Naive thymus-derived CD4-positive, alpha-beta T cell (primary cell): ENCODE measurements at regions of chr7 and their contacts with region 1.

Region 1: GRCh38 chr7:7761340-7761980 is 43.1 kb upstream of the RPA3 start:
- DNase-seq: peak in 7 of 9 donors; percentile 25 to 59 (median 51)
- ATAC-seq: peak; percentile 45
- H3K4me3 ChIP-seq: peak overlapping the region; percentile 48
- H3K4me3 Mint-ChIP-seq: peak overlapping the region; percentile 69 to 99 (median 90)
- H3K27ac ChIP-seq: peak overlapping the region; percentile 76
- H3K27ac Mint-ChIP-seq: peak overlapping the region; percentile 88 to 99 (median 94)
- H3K4me1 ChIP-seq: peaks cover 8 to 31% of the 10 kb centered on the region in 2 donors
- H3K4me1 Mint-ChIP-seq: peaks cover 30 to 54% (median 51%) of the 10 kb centered on the region in 7 donors
- H3K27me3 ChIP-seq: no peaks in the 10 kb centered on the region
- H3K27me3 Mint-ChIP-seq: no peaks in the 10 kb centered on the region

Region 2: DNA sequence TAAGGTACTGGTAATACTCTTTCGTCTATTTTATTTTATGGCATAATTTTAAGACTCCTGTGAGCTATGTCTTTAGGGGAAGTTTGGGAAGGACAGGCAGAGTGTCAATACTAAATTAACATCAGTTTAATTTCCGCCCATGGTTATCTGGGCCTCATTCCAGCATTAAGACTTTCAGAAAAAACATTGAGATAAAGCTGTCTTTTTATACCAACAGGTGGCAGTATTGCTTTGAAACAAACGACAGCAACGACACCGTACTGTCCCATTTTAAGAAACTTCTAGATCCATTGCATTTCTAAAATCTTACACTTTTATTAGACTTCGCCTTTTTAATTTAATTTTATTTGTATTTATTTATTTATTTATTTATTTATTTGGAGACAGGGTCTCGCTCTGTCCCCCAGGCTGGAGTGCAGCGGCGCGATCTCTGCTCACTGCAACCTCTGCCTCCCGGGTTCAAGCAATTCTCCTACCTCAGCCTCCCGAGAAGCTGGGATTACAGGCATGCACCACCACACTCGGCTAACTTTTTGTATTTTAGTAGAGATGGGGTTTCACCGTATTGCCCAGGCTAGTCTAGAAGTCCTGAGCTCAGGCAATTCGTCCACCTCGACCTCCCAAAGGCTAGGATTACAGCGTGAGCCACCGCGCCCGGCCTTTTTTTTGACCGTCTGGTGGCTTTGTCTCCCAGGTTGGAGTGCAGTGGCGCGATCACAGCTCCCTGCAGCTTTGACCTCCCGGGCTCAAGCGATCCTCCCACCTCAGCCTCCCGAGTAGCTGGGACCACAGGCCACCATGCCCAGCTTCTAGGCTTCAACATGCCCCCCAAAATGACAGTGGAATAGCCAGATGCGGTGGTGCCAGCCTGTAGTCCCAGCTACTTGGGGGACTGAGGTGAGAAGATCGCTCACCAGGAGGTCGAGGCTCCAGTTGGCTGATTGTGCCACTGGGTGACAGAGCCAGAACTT is 657.8 kb before region 1 on chr7:
- CTCF ChIA-PET with region 1: interaction called, 3 read pairs
- POLR2A ChIA-PET with region 1: no interaction called
- intact Hi-C with region 1: loop called (anchors 1 to 5 kb)
- DNase-seq: peak in 7 of 9 donors; percentile 41 to 71 (median 61)
- ATAC-seq: peak; percentile 85
- H3K4me3 ChIP-seq: no peak overlapping the region
- H3K4me3 Mint-ChIP-seq: peak overlapping the region in 1 of 10 donors; percentile 42
- H3K27ac ChIP-seq: no peak overlapping the region
- H3K27ac Mint-ChIP-seq: peak overlapping the region in 3 of 9 donors; percentile 5 to 72 (median 43)
- H3K4me1 ChIP-seq: peaks cover 0 to 17% of the 10 kb centered on the region in 2 donors
- H3K4me1 Mint-ChIP-seq: peaks cover 6 to 31% (median 29%) of the 10 kb centered on the region in 7 donors
- H3K27me3 ChIP-seq: no peaks in the 10 kb centered on the region
- H3K27me3 Mint-ChIP-seq: peaks cover 0 to 9% (median 0%) of the 10 kb centered on the region in 5 donors

Region 3: GRCh38 chr7:7640221-7641128 is 121.0 kb before region 1 on chr7 and contains the start of gene UMAD1:
- CTCF ChIA-PET with region 1: interaction called, 6 read pairs
- POLR2A ChIA-PET with region 1: interaction called, 8 read pairs
- intact Hi-C with region 1: loop called (anchors 1 kb)
- DNase-seq: peak; percentile 86 to 100 (median 99)
- ATAC-seq: peak; percentile 97
- H3K4me3 ChIP-seq: peak within 1 kb of the TSS; percentile 79
- H3K4me3 Mint-ChIP-seq: peak within 1 kb of the TSS; percentile 90 to 98 (median 96)
- H3K27ac ChIP-seq: peak within 1 kb of the TSS; percentile 98
- H3K27ac Mint-ChIP-seq: peak within 1 kb of the TSS; percentile 97 to 99 (median 98)
- H3K4me1 ChIP-seq: peaks cover 14 to 19% of the 10 kb centered on the region in 2 donors
- H3K4me1 Mint-ChIP-seq: peaks cover 31 to 67% (median 55%) of the 10 kb centered on the region in 7 donors
- H3K27me3 ChIP-seq: no peaks in the 10 kb centered on the region
- H3K27me3 Mint-ChIP-seq: no peaks in the 10 kb centered on the region
- total RNA-seq, gene UMAD1: 11.4 to 28.5 (median 14.5) TPM

Region 4: DNA sequence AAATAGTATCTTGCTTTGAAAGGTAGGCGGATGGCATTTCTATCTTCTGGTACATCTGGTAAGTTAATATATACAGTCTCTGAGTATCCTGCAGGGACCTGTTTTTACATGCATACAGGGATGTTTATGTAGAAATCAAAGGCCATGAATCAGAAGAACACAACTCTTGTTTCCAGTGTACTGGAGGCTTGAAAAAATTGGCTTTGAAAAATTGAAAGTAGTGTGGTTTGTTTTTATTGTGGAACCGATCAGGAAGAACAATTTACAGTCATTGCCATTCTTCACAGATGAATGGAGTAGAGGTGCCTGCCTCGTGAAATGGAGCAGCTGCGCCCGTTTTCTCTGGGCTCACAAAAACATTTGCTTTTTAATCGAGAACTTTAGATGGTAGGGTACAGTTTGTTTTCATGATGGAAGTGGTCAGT is 10.9 kb after region 1 on chr7:
- CTCF ChIA-PET with region 1: interaction called, 6 read pairs
- POLR2A ChIA-PET with region 1: no interaction called
- intact Hi-C with region 1: loop called in 1 of 2 experiments (anchors 2 kb)
- DNase-seq: peak in 4 of 9 donors; percentile 18 to 41 (median 31)
- ATAC-seq: peak; percentile 40
- H3K4me3 ChIP-seq: peak overlapping the region; percentile 15
- H3K4me3 Mint-ChIP-seq: peak overlapping the region; percentile 64 to 95 (median 82)
- H3K27ac ChIP-seq: no peak overlapping the region
- H3K27ac Mint-ChIP-seq: peak overlapping the region; percentile 27 to 93 (median 79)
- H3K4me1 ChIP-seq: peaks cover 0 to 3% of the 10 kb centered on the region in 2 donors
- H3K4me1 Mint-ChIP-seq: peaks cover 10 to 46% (median 36%) of the 10 kb centered on the region in 7 donors
- H3K27me3 ChIP-seq: no peaks in the 10 kb centered on the region
- H3K27me3 Mint-ChIP-seq: no peaks in the 10 kb centered on the region

Region 5: DNA sequence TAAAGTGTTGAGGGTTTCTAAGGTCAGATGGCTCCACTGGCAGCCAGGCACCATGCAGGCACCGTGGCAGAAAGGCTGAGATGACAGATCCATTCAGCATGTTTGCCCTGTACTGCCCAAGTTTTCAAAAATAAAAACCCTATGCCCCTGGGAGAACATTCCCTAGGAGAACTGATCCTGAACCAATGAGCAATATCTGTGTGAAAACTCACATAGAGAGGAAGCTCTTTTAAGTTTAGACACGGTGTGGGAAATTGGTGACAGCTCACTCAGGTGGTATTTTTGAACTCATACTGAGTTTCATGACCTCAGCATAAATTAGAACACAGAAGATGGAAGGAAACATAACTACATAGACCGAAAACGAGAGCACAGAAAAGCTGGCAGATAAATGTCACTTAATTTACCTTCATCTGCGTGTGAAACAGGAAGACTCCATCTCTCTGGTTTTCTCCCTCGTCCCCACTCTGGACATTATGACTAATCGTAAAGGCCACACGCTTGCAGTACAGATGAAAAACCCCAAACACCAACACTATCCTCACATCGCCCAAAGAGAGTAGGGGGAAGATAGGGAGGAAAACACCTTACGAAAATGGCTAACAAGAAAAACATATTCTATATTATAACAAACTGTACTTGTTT is 372.8 kb after region 1 on chr7:
- CTCF ChIA-PET with region 1: interaction called, 5 read pairs
- POLR2A ChIA-PET with region 1: no interaction called
- intact Hi-C with region 1: loop called in 1 of 2 experiments (anchors 2 kb)
- DNase-seq: peak in 8 of 9 donors; percentile 25 to 51 (median 44)
- ATAC-seq: peak; percentile 32
- H3K4me3 ChIP-seq: peak overlapping the region; percentile 7
- H3K4me3 Mint-ChIP-seq: peak overlapping the region; percentile 25 to 82 (median 61)
- H3K27ac ChIP-seq: peak overlapping the region; percentile 47
- H3K27ac Mint-ChIP-seq: peak overlapping the region; percentile 78 to 98 (median 94)
- H3K4me1 ChIP-seq: peaks cover 45 to 50% of the 10 kb centered on the region in 2 donors
- H3K4me1 Mint-ChIP-seq: peaks cover 38 to 65% (median 56%) of the 10 kb centered on the region in 7 donors
- H3K27me3 ChIP-seq: no peaks in the 10 kb centered on the region
- H3K27me3 Mint-ChIP-seq: no peaks in the 10 kb centered on the region

Region 6: DNA sequence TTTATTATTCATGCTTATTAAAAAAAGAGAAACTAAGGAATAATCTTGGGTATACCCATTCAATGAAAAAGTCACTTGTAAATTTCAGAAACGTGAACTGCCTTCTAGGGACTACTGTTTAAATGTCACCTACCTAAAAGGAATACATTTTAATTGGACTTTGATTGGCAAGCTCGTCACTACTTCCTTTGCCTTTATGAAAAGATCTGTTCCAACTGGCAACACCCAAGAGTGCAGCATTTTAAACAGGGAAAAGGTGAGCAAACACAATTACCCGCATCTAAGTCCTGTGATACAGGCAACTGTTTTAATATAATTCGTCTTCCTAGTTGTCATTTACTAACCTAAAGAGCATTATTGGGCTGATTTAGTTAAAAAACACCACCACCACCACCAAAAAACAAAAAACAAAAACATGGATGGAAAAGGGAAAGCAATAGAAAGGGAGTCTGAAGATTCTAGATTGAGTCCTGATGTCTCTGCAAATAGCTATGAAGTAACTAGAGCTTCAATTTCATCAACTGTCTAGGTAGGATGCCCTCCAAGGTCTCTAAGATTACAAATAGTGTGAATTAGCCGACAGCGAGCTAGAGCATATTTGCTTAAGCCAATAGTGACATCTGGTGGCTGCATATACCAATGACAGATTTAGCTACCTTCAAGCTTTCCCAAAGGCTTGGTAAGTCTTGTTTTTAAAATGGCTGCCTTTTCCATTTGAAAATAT is 534.3 kb after region 1 on chr7:
- CTCF ChIA-PET with region 1: no interaction called
- POLR2A ChIA-PET with region 1: no interaction called
- intact Hi-C with region 1: loop called (anchors 2 to 10 kb)
- DNase-seq: peak in 7 of 9 donors; percentile 28 to 58 (median 44)
- ATAC-seq: peak; percentile 91
- H3K4me3 ChIP-seq: no peak overlapping the region
- H3K4me3 Mint-ChIP-seq: no peak overlapping the region
- H3K27ac ChIP-seq: no peak overlapping the region
- H3K27ac Mint-ChIP-seq: peak overlapping the region in 1 of 9 donors; percentile 48
- H3K4me1 ChIP-seq: no peaks in the 10 kb centered on the region
- H3K4me1 Mint-ChIP-seq: peaks cover 0 to 3% (median 0%) of the 10 kb centered on the region in 7 donors
- H3K27me3 ChIP-seq: no peaks in the 10 kb centered on the region
- H3K27me3 Mint-ChIP-seq: peaks cover 0 to 22% (median 12%) of the 10 kb centered on the region in 5 donors

Region 7: GRCh38 chr7:8338206-8338605 is 576.7 kb after region 1 on chr7:
- CTCF ChIA-PET with region 1: no interaction called
- POLR2A ChIA-PET with region 1: no interaction called
- intact Hi-C with region 1: no loop called
- DNase-seq: no peak
- ATAC-seq: no peak
- H3K4me3 ChIP-seq: no peak overlapping the region
- H3K4me3 Mint-ChIP-seq: no peak overlapping the region
- H3K27ac ChIP-seq: no peak overlapping the region
- H3K27ac Mint-ChIP-seq: no peak overlapping the region
- H3K4me1 ChIP-seq: no peaks in the 10 kb centered on the region
- H3K4me1 Mint-ChIP-seq: no peaks in the 10 kb centered on the region
- H3K27me3 ChIP-seq: no peaks in the 10 kb centered on the region
- H3K27me3 Mint-ChIP-seq: peaks cover 2 to 16% (median 9%) of the 10 kb centered on the region in 5 donors